ENCODE measurements at regions of chr2 and their contacts with region 1.

Region 1: GRCh38 chr2:203740780-203741281 is 34.4 kb downstream of the CD28 start:
- DNase-seq: peak; percentile 52
- ATAC-seq: peak; percentile 70
- H3K4me3 Mint-ChIP-seq: peak overlapping the region; percentile 62
- H3K27ac Mint-ChIP-seq: peak overlapping the region; percentile 99
- H3K4me1 Mint-ChIP-seq: peaks cover 92% of the 10 kb centered on the region
- H3K27me3 Mint-ChIP-seq: no peaks in the 10 kb centered on the region

Region 2: GRCh38 chr2:203327901-203328759 is 412.7 kb before region 1 on chr2 and contains the start of gene ABI2:
- CTCF ChIA-PET with region 1: no interaction called
- POLR2A ChIA-PET with region 1: interaction called, 14 read pairs
- intact Hi-C with region 1: no loop called
- DNase-seq: peak; percentile 77
- ATAC-seq: peak; percentile 52
- H3K4me3 Mint-ChIP-seq: peak within 1 kb of the TSS; percentile 91
- H3K27ac Mint-ChIP-seq: peak within 1 kb of the TSS; percentile 84
- H3K4me1 Mint-ChIP-seq: peaks cover 31% of the 10 kb centered on the region
- H3K27me3 Mint-ChIP-seq: no peaks in the 10 kb centered on the region
- total RNA-seq, gene ABI2: 40.6 to 57.6 TPM

Region 3: DNA sequence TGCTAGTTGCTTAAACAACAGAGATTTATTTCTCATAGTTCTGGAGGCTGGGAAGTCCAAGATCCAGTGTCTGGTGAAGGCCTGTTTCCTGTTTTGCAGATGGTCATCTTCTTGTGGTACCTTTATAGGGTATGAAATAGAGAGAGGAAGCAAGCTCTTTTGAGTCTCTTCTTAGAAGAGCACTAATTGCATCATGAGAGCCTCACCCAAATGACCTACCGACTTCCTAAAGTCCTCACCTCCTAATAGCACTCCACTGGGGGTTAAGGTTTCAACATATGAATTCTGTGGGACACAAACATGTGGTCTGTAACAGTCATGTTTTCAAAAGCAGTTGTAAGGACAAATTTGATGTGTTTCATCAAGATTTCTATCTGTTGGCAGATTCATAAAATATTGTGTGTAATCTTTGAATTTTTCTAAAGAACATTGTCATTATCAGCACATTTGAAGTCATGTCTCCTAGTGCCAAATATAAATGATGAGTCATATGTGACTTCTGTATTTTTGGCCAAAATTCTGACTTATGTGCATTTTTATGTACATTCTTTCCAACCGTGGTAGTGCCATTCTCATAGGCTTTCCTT is 10.9 kb after region 1 on chr2:
- CTCF ChIA-PET with region 1: interaction called, 30 read pairs
- POLR2A ChIA-PET with region 1: interaction called, 21 read pairs
- intact Hi-C with region 1: loop called in 1 of 2 experiments (anchors 1 kb)
- DNase-seq: no peak
- ATAC-seq: no peak
- H3K4me3 Mint-ChIP-seq: no peak overlapping the region
- H3K27ac Mint-ChIP-seq: peak overlapping the region; percentile 77
- H3K4me1 Mint-ChIP-seq: peaks cover 67% of the 10 kb centered on the region
- H3K27me3 Mint-ChIP-seq: no peaks in the 10 kb centered on the region

Region 4: DNA sequence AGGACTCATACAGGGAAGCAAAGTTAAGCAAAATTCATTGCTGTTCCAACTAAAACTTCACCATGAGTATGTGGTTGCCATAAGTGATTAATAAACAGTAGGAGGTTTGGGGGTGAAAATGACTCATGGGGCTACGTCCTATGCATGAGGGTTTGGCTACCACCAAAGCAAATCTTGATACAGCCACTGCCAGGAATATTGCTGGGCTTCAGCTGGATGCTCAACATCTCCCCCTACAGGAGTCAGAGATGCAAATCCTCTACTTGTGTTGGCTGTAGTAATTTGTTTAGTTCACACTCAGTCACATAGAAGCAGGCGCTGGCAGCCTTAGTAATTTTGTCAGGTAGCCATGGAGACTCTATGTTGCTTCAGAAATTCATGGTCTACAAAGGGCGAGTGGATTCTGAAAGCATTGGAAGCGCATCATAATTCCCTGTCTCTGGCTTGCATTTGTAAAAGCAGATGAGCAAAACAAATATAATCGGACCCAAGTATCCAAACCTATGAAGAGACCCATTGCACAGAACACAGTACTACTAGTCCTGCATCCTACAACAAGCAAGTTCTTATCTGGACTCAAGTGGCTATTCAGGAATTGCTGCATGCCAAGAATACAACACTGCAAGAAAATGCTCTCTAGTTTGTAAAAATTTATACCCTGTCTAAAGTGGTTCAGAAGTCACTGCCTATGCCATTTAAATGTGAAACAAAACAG is 41.6 kb after region 1 on chr2:
- CTCF ChIA-PET with region 1: interaction called, 4 read pairs
- POLR2A ChIA-PET with region 1: interaction called, 3 read pairs
- intact Hi-C with region 1: loop called (anchors 1 to 5 kb)
- DNase-seq: peak; percentile 81
- ATAC-seq: peak; percentile 94
- H3K4me3 Mint-ChIP-seq: no peak overlapping the region
- H3K27ac Mint-ChIP-seq: peak overlapping the region; percentile 89
- H3K4me1 Mint-ChIP-seq: peaks cover 52% of the 10 kb centered on the region
- H3K27me3 Mint-ChIP-seq: no peaks in the 10 kb centered on the region

Region 5: GRCh38 chr2:203893401-203893800 is 152.6 kb after region 1 on chr2:
- CTCF ChIA-PET with region 1: interaction called, 3 read pairs
- POLR2A ChIA-PET with region 1: interaction called, 3 read pairs
- intact Hi-C with region 1: loop called in 1 of 2 experiments (anchors 2 kb)
- DNase-seq: no peak
- ATAC-seq: no peak
- H3K4me3 Mint-ChIP-seq: peak overlapping the region; percentile 23
- H3K27ac Mint-ChIP-seq: peak overlapping the region; percentile 85
- H3K4me1 Mint-ChIP-seq: peaks cover 78% of the 10 kb centered on the region
- H3K27me3 Mint-ChIP-seq: peaks cover 2% of the 10 kb centered on the region

Region 6: GRCh38 chr2:204010628-204011560 is 270.1 kb after region 1 on chr2:
- CTCF ChIA-PET with region 1: no interaction called
- POLR2A ChIA-PET with region 1: interaction called, 3 read pairs
- intact Hi-C with region 1: loop called in 1 of 2 experiments (anchors 5 kb)
- DNase-seq: peak; percentile 31
- ATAC-seq: peak; percentile 42
- H3K4me3 Mint-ChIP-seq: peak overlapping the region; percentile 34
- H3K27ac Mint-ChIP-seq: peak overlapping the region; percentile 72
- H3K4me1 Mint-ChIP-seq: peaks cover 84% of the 10 kb centered on the region
- H3K27me3 Mint-ChIP-seq: no peaks in the 10 kb centered on the region